Psoas muscle (tissue), 8 donors: ENCODE measurements at regions of chr20 and their contacts with region 1.

Region 1: DNA sequence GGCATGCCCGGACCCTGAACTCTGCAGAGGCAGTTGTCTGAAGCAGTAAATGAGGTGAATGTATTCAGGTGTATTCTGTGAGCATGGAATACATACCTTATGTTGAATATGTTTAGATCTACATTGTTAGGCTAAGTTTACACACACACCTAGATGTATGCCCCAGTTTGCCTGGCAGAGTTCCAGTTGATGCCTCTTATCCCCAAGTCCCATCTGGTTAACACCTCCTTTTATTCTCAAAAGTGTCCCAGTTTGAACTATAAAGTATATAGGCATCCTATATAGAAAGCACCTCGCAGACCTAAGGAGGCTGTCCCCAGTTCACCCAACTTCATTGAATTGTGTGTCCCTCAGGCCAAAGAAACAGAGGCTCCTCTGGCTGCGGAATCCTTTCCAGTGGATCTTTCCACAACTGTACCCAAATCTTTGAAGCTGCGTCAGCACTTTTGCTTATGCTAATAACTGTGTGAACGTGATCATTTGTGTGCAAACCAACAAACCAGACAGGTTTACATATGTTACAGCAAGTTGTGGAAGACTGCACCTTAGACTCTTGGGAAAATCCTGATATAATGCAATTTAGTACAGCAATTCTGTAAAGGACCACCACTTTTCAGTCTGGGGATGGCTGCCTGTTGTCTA is 4.8 kb upstream of the DHX35 start:
- DNase-seq: no peak
- ATAC-seq: no peak
- H3K4me3 ChIP-seq: no peak overlapping the region
- H3K27ac ChIP-seq: no peak overlapping the region
- H3K4me1 ChIP-seq: no peaks in the 10 kb centered on the region
- H3K27me3 ChIP-seq: no peaks in the 10 kb centered on the region
- CTCF ChIP-seq: no peak

Region 2: GRCh38 chr20:38919683-38920082 is 37.7 kb before region 1 on chr20:
- intact Hi-C with region 1: loop called in 1 of 2 experiments (anchors 5 kb)
- DNase-seq: no peak
- ATAC-seq: no peak
- H3K4me3 ChIP-seq: no peak overlapping the region
- H3K27ac ChIP-seq: no peak overlapping the region
- H3K4me1 ChIP-seq: no peaks in the 10 kb centered on the region
- H3K27me3 ChIP-seq: peaks cover 0 to 6% (median 0%) of the 10 kb centered on the region in 3 donors
- CTCF ChIP-seq: no peak